ENCODE measurements at regions of chr21 and their contacts with region 1.

Region 1: DNA sequence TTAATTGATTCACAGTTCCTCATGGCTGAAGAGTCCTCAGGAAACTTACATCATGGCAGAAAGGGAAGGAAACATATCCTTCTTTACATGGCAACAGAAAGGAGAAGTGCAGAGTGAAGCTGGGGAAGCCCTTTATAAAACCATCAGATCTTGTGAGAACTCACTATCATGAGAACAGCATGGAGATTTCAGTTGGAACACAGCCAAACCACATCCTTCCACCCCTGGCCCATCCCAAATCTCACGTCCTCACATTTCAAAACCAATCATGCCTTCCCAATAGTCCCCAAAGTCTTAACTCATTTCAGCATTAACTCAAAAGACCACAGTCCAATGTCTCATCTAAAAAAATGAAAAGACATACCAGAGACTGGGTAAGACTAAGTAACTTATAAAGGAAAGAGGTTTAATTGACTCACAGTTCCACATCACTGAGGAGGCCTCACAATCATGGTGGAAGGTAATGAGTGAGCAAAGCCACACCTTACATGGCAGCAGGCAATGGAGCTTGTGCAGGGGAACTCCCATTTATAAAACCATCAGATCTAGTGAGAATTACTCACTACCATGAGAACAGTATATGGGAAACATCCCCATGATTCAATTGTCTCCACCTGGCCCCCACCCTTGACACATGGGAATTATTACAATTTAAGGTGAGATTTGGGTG is 105.2 kb downstream of the MRPL39 start:
- DNase-seq: peak; percentile 67
- H3K4me3 Mint-ChIP-seq: peak overlapping the region; percentile 52
- H3K27ac Mint-ChIP-seq: peak overlapping the region; percentile 96
- H3K4me1 Mint-ChIP-seq: peaks cover 39% of the 10 kb centered on the region
- H3K27me3 Mint-ChIP-seq: no peaks in the 10 kb centered on the region

Region 2: DNA sequence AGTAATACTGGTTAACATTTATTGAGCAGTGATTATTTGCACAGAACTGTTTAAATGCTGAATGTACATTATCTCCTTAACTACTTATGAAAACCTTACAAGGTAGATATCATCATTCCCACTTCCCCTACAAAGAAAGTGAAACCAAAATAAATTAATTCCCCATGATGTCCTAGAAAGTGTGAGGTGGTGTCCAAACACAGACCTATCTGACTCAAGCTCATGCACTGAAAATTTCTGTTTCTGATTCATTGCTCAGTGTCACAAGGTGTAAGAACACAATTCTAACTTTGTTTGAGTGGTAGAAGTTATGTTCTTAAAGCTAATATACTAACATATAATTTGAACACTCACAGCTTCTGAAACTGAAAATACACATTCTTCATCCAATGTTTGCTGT is 73.6 kb before region 1 on chr21:
- intact Hi-C with region 1: loop called (anchors 1 kb)
- DNase-seq: no peak
- H3K4me3 Mint-ChIP-seq: peak overlapping the region; percentile 42
- H3K27ac Mint-ChIP-seq: peak overlapping the region; percentile 57
- H3K4me1 Mint-ChIP-seq: peaks cover 36% of the 10 kb centered on the region
- H3K27me3 Mint-ChIP-seq: no peaks in the 10 kb centered on the region

Region 3: GRCh38 chr21:25464275-25464674 is 37.9 kb before region 1 on chr21:
- intact Hi-C with region 1: loop called (anchors 1 kb)
- DNase-seq: peak; percentile 73
- H3K4me3 Mint-ChIP-seq: peak overlapping the region; percentile 69
- H3K27ac Mint-ChIP-seq: peak overlapping the region; percentile 98
- H3K4me1 Mint-ChIP-seq: peaks cover 48% of the 10 kb centered on the region
- H3K27me3 Mint-ChIP-seq: no peaks in the 10 kb centered on the region

Measured in activated CD4-positive, alpha-beta T cell treated with anti-CD3 and anti-CD28 coated beads, Interleukin-2, amount 10 ng/mL, durations not matched to agents 24 days and 14 days (primary cell).